Naive thymus-derived CD4-positive, alpha-beta T cell (primary cell): ENCODE measurements at regions of chr4 and their contacts with region 1.

Region 1: DNA sequence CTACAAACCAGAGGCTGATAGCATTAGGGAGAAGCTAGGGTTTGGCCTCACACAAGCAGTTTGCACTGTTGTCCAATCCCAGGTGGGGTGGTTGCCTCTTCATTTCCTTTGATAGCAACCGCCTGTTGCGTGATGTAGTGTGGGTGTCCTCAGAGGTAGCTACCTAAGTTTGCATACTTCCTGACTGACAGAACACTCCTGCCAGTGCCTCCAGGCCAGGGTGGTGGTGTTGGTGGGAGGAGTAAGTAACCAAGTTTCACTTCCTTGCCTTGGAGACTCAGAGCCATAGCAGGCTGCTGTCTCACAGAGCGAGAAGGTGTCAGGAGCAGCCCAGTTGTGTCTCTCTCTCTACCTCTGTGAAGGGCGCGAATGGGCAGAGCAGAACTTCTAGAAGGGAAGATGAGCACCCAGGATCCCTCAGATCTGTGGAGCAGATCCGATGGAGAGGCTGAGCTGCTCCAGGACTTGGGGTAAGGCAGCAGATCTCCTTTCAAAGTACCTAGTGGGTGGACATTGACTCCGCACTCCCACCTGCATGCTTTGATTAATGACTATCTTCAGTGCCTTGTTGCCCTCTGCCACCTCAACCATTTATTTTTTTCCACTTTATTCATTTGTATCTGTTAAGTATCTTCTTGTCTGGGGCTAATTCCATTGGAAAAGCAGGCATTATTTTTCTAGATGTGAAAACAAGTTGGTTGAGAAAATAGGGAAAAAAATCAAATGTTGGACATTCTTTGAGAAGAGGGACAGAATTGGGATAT is at the start of gene DAPP1:
- DNase-seq: peak; percentile 44 to 88 (median 84)
- ATAC-seq: peak; percentile 95
- H3K4me3 ChIP-seq: peak within 1 kb of the TSS; percentile 71
- H3K4me3 Mint-ChIP-seq: peak within 1 kb of the TSS; percentile 71 to 95 (median 92)
- H3K27ac ChIP-seq: peak within 1 kb of the TSS; percentile 77
- H3K27ac Mint-ChIP-seq: peak within 1 kb of the TSS; percentile 87 to 98 (median 96)
- H3K4me1 ChIP-seq: peaks cover 16 to 32% of the 10 kb centered on the region in 2 donors
- H3K4me1 Mint-ChIP-seq: peaks cover 41 to 72% (median 63%) of the 10 kb centered on the region in 7 donors
- H3K27me3 ChIP-seq: no peaks in the 10 kb centered on the region
- H3K27me3 Mint-ChIP-seq: no peaks in the 10 kb centered on the region
- total RNA-seq, gene DAPP1: 10.9 to 49.6 (median 20.7) TPM

Region 2: GRCh38 chr4:98260579-98261290 is 1556.0 kb before region 1 on chr4:
- CTCF ChIA-PET with region 1: no interaction called
- POLR2A ChIA-PET with region 1: no interaction called
- intact Hi-C with region 1: loop called (anchors 2 to 5 kb)
- DNase-seq: peak in 6 of 9 donors; percentile 69 to 95 (median 78)
- ATAC-seq: peak; percentile 85
- H3K4me3 ChIP-seq: peak overlapping the region; percentile 90
- H3K4me3 Mint-ChIP-seq: peak overlapping the region; percentile 92 to 98 (median 94)
- H3K27ac ChIP-seq: peak overlapping the region; percentile 86
- H3K27ac Mint-ChIP-seq: peak overlapping the region; percentile 84 to 97 (median 92)
- H3K4me1 ChIP-seq: peaks cover 5 to 12% of the 10 kb centered on the region in 2 donors
- H3K4me1 Mint-ChIP-seq: peaks cover 31 to 60% (median 54%) of the 10 kb centered on the region in 7 donors
- H3K27me3 ChIP-seq: no peaks in the 10 kb centered on the region
- H3K27me3 Mint-ChIP-seq: no peaks in the 10 kb centered on the region

Region 3: GRCh38 chr4:99827857-99828256 is 11.1 kb after region 1 on chr4:
- CTCF ChIA-PET with region 1: interaction called, 3 read pairs
- POLR2A ChIA-PET with region 1: interaction called, 3 read pairs
- intact Hi-C with region 1: loop called in 1 of 2 experiments (anchors 1 kb)
- DNase-seq: no peak
- ATAC-seq: no peak
- H3K4me3 ChIP-seq: no peak overlapping the region
- H3K4me3 Mint-ChIP-seq: no peak overlapping the region
- H3K27ac ChIP-seq: no peak overlapping the region
- H3K27ac Mint-ChIP-seq: peak overlapping the region in 1 of 9 donors; percentile 20
- H3K4me1 ChIP-seq: no peaks in the 10 kb centered on the region
- H3K4me1 Mint-ChIP-seq: peaks cover 18 to 67% (median 44%) of the 10 kb centered on the region in 7 donors
- H3K27me3 ChIP-seq: no peaks in the 10 kb centered on the region
- H3K27me3 Mint-ChIP-seq: no peaks in the 10 kb centered on the region

Region 4: GRCh38 chr4:99855678-99856077 is 39.0 kb after region 1 on chr4:
- CTCF ChIA-PET with region 1: no interaction called
- POLR2A ChIA-PET with region 1: interaction called, 6 read pairs
- intact Hi-C with region 1: loop called in 1 of 2 experiments (anchors 1 kb)
- DNase-seq: no peak
- ATAC-seq: peak; percentile 78
- H3K4me3 ChIP-seq: no peak overlapping the region
- H3K4me3 Mint-ChIP-seq: peak overlapping the region in 9 of 10 donors; percentile 11 to 66 (median 45)
- H3K27ac ChIP-seq: no peak overlapping the region
- H3K27ac Mint-ChIP-seq: peak overlapping the region in 8 of 9 donors; percentile 5 to 89 (median 46)
- H3K4me1 ChIP-seq: peaks cover 8 to 9% of the 10 kb centered on the region in 2 donors
- H3K4me1 Mint-ChIP-seq: peaks cover 22 to 72% (median 34%) of the 10 kb centered on the region in 7 donors
- H3K27me3 ChIP-seq: no peaks in the 10 kb centered on the region
- H3K27me3 Mint-ChIP-seq: no peaks in the 10 kb centered on the region

Region 5: DNA sequence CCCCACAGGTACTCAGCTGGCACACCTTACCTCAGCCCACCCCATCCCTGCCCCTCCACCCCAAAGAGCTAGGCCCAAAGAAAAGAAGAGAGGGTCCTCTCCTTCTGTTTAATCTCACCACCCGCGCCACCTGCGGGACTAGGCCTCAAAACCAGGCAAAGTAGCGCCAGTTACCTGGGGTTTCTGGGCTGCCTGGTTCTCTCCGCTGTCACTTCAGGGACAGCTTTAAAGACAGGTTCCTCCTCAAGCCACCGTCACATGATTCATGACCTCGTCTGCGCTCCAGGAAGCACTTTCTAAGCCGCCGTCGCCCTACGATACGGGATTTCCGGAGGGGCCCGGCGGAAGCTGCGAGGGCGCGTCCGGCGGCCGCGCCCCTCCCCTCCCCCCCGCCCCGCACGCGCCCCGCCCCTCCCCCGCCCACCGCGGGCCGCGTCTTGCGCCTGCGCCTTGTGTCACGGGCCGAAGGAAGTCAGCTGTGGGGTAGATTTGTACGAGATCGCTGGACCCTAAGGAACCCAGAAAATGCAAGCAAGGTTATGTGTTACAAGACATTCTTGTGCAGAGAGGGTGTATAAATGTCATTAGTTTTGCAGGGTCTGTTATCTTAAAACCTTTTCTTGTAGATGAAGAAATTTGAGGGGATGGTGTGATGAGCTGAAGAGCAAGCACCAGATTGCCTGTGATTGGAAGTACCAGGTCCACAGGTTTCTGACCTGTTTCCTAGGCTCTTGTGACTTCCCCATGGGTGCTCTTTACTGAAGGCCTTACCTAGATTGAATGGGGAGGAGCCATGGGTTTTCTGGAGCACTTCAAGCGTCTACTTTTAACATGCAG is 77.7 kb after region 1 on chr4 and contains the start of gene LAMTOR3:
- CTCF ChIA-PET with region 1: interaction called, 4 read pairs
- POLR2A ChIA-PET with region 1: interaction called, 13 read pairs
- intact Hi-C with region 1: loop called (anchors 1 kb)
- DNase-seq: peak; percentile 70 to 92 (median 89)
- ATAC-seq: peak; percentile 98
- H3K4me3 ChIP-seq: peak within 1 kb of the TSS; percentile 92
- H3K4me3 Mint-ChIP-seq: peak within 1 kb of the TSS; percentile 96 to 99 (median 98)
- H3K27ac ChIP-seq: peak within 1 kb of the TSS; percentile 96
- H3K27ac Mint-ChIP-seq: peak within 1 kb of the TSS; percentile 96 to 99 (median 98)
- H3K4me1 ChIP-seq: peaks cover 13 to 25% of the 10 kb centered on the region in 2 donors
- H3K4me1 Mint-ChIP-seq: peaks cover 25 to 55% (median 52%) of the 10 kb centered on the region in 7 donors
- H3K27me3 ChIP-seq: no peaks in the 10 kb centered on the region
- H3K27me3 Mint-ChIP-seq: no peaks in the 10 kb centered on the region
- total RNA-seq, gene LAMTOR3: 20.1 to 32.6 (median 27.4) TPM